ENCODE measurements at regions of chr3 and their contacts with region 1.

Region 1: DNA sequence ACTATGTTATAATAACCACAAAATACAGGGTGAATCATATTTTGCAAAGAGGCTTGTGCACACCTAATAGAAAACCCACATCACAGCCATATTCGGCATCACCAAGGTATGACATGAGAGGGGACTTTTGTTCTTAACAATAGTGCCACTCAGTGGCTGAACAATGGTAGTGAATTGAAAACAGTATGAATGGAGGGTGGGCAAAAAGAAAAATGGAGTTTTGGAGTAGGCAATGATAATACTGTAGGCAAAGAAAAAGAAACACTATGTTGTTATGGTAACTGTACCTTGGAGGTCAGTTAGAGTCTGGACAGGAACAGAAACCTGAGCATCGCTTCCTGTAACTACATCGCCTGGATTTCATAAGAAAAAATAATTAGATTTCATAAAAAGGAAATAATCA is 348.6 kb downstream of the PLCL2 start:
- DNase-seq: peak; percentile 51
- ATAC-seq: peak; percentile 99
- H3K4me3 ChIP-seq: no peak overlapping the region
- H3K27ac ChIP-seq: no peak overlapping the region
- H3K4me1 ChIP-seq: peaks cover 12% of the 10 kb centered on the region; the same call in 1 of the 2 replicates
- H3K27me3 ChIP-seq: no peaks in the 10 kb centered on the region
- CTCF ChIP-seq: peak; percentile 50 to 77 (median 65); a peak in 5 of 6 replicates
- EP300 ChIP-seq: no peak
- POLR2A ChIP-seq: no peak
- RAD21 ChIP-seq: peak; percentile 99

Region 2: GRCh38 chr3:16264708-16265454 is 968.5 kb before region 1 on chr3 and contains the starts of genes DPH3 and OXNAD1:
- CTCF ChIA-PET with region 1: interaction called, 8 read pairs
- POLR2A ChIA-PET with region 1: no interaction called
- RAD21 ChIA-PET with region 1: no interaction called
- SMC1A ChIA-PET with region 1: no interaction called
- in situ Hi-C with region 1: no loop called
- intact Hi-C with region 1: loop called (anchors 10 kb)
- DNase-seq: peak; percentile 95
- ATAC-seq: peak; percentile 98
- H3K4me3 ChIP-seq: peak within 1 kb of the TSS; percentile 91
- H3K27ac ChIP-seq: peak within 1 kb of the TSS; percentile 86
- H3K4me1 ChIP-seq: peaks cover 3% of the 10 kb centered on the region
- H3K27me3 ChIP-seq: no peaks in the 10 kb centered on the region
- CTCF ChIP-seq: no peak
- EP300 ChIP-seq: no peak
- POLR2A ChIP-seq: peak; percentile 58
- RAD21 ChIP-seq: no peak
- polyA plus RNA-seq, gene DPH3: 67.1 to 71.8 TPM
- polyA plus RNA-seq, gene OXNAD1: 5.6 to 6.9 TPM

Region 3: DNA sequence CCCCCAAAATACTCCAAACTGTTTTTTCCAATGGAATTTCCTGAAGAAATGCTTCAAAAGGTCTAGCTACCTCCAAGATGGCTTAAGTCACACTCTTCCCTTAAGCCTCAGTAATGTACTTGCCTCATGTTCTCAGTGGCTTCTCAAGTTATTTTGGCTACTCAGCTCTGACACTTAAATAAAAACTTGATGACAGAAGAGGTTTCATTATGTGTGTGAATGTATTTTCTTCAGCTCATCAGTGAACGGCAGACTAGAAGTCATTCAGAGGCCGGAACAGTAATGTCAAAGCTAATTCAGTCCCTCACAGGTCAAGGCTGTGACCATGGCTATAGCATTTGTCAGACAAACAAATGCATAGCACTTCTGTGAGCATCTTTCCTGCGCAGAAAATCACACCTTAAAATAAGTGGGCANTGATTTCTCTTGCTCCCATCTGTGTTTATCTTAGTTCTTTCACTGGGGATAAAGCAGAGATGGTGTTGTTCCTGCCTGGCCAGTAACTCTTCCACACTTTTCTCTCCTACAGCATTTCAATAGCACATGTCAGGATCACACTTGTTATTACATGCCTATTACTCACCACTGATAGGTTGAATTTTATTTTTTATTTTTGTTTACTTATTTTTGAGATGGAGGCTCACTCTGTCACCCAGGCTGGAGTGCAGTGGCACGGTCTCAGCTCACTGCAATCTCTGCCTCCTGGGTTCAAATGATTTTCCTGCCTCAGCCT is 417.2 kb before region 1 on chr3:
- CTCF ChIA-PET with region 1: no interaction called
- POLR2A ChIA-PET with region 1: no interaction called
- RAD21 ChIA-PET with region 1: interaction called, 4 read pairs
- SMC1A ChIA-PET with region 1: interaction called, 10 read pairs
- in situ Hi-C with region 1: no loop called
- intact Hi-C with region 1: no loop called
- DNase-seq: peak; percentile 56
- ATAC-seq: peak; percentile 97
- H3K4me3 ChIP-seq: no peak overlapping the region
- H3K27ac ChIP-seq: no peak overlapping the region
- H3K4me1 ChIP-seq: peaks cover 11% of the 10 kb centered on the region
- H3K27me3 ChIP-seq: no peaks in the 10 kb centered on the region
- CTCF ChIP-seq: no peak
- EP300 ChIP-seq: no peak
- POLR2A ChIP-seq: no peak
- RAD21 ChIP-seq: no peak

Region 4: GRCh38 chr3:16928386-16929132 is 304.8 kb before region 1 on chr3:
- CTCF ChIA-PET with region 1: interaction called, 5 read pairs
- POLR2A ChIA-PET with region 1: no interaction called
- RAD21 ChIA-PET with region 1: interaction called, 19 read pairs
- SMC1A ChIA-PET with region 1: interaction called, 10 read pairs
- in situ Hi-C with region 1: no loop called
- intact Hi-C with region 1: loop called (anchors 5 kb)
- DNase-seq: no peak
- ATAC-seq: peak; percentile 69
- H3K4me3 ChIP-seq: 0 out of 2 replicates have a peak overlapping the region, but pooled peaks have one; percentile 4
- H3K27ac ChIP-seq: peak overlapping the region; percentile 63
- H3K4me1 ChIP-seq: peaks cover 66% of the 10 kb centered on the region
- H3K27me3 ChIP-seq: no peaks in the 10 kb centered on the region
- CTCF ChIP-seq: no peak
- EP300 ChIP-seq: no peak
- POLR2A ChIP-seq: no peak
- RAD21 ChIP-seq: no peak

Region 5: GRCh38 chr3:17055374-17056276 is 177.8 kb before region 1 on chr3:
- CTCF ChIA-PET with region 1: no interaction called
- POLR2A ChIA-PET with region 1: no interaction called
- RAD21 ChIA-PET with region 1: no interaction called
- SMC1A ChIA-PET with region 1: interaction called, 3 read pairs
- in situ Hi-C with region 1: no loop called
- intact Hi-C with region 1: loop called (anchors 2 kb)
- DNase-seq: peak; percentile 90
- ATAC-seq: peak; percentile 79
- H3K4me3 ChIP-seq: no peak overlapping the region
- H3K27ac ChIP-seq: peak overlapping the region; percentile 97
- H3K4me1 ChIP-seq: peaks cover 34% of the 10 kb centered on the region
- H3K27me3 ChIP-seq: no peaks in the 10 kb centered on the region
- CTCF ChIP-seq: no peak
- EP300 ChIP-seq: peak; percentile 73 to 88
- POLR2A ChIP-seq: no peak
- RAD21 ChIP-seq: peak; percentile 16; the same call in 1 of the 2 replicates

Region 6: GRCh38 chr3:17179381-17180210 is 53.8 kb before region 1 on chr3:
- CTCF ChIA-PET with region 1: interaction called, 13 read pairs
- POLR2A ChIA-PET with region 1: no interaction called
- RAD21 ChIA-PET with region 1: interaction called, 7 read pairs
- SMC1A ChIA-PET with region 1: interaction called, 10 read pairs
- in situ Hi-C with region 1: no loop called
- intact Hi-C with region 1: loop called (anchors 2 kb)
- DNase-seq: peak; percentile 56
- ATAC-seq: peak; percentile 84
- H3K4me3 ChIP-seq: no peak overlapping the region
- H3K27ac ChIP-seq: no peak overlapping the region
- H3K4me1 ChIP-seq: peaks cover 38% of the 10 kb centered on the region
- H3K27me3 ChIP-seq: no peaks in the 10 kb centered on the region
- CTCF ChIP-seq: no peak
- EP300 ChIP-seq: peak; percentile 82 to 97
- POLR2A ChIP-seq: no peak
- RAD21 ChIP-seq: no peak

Region 7: GRCh38 chr3:17412950-17413530 is 179.6 kb after region 1 on chr3:
- CTCF ChIA-PET with region 1: interaction called, 14 read pairs
- POLR2A ChIA-PET with region 1: no interaction called
- RAD21 ChIA-PET with region 1: no interaction called
- SMC1A ChIA-PET with region 1: interaction called, 3 read pairs
- in situ Hi-C with region 1: no loop called
- intact Hi-C with region 1: no loop called
- DNase-seq: peak; percentile 41
- ATAC-seq: peak; percentile 98
- H3K4me3 ChIP-seq: no peak overlapping the region
- H3K27ac ChIP-seq: no peak overlapping the region
- H3K4me1 ChIP-seq: no peaks in the 10 kb centered on the region
- H3K27me3 ChIP-seq: no peaks in the 10 kb centered on the region
- CTCF ChIP-seq: peak; percentile 70 to 80 (median 70)
- EP300 ChIP-seq: no peak
- POLR2A ChIP-seq: no peak
- RAD21 ChIP-seq: peak; percentile 93

Measured in GM12878 (cell line).